Activated CD4-positive, alpha-beta memory T cell treated with anti-CD3 and anti-CD28 coated beads for 36 hours (primary cell): ENCODE measurements at regions of chr1 and their contacts with region 1.

Region 1: DNA sequence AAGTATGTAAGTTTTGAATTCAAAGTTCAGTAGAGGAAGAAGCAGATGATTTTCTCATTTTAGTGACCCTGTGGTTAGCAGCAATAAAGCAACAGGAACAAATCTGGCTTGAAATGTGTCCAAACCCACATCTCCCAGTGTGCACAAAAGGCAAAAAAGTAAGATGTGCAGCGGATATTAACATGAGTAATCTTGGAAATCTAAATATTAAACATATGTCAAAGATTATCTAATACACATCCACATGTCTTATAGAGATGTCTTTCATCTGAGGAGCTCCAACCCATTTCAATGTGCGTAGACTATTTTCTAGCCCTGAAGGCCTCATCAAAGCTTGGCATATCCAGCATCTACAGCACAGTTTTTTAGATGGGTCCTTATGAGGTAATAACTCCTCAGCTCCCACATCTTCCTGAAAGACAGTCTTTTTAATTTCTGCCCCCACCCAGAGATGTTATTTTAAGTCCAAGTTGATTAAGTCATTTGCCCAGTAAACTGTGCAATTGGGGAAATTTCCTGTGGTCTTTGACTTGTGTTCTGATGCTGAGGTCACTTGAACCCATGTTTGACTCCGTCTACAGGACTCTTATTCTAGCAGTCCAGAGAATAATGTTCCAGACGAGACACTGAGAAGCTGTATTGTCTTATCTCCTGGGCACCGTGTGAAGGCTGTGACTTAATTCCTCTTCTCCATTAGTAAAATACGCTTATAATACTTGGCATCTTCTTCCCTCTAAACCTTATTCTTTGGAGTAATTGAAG is 73.7 kb downstream of the LMO4 start:
- DNase-seq: no peak
- H3K4me3 Mint-ChIP-seq: no peak overlapping the region
- H3K27ac Mint-ChIP-seq: no peak overlapping the region
- H3K4me1 Mint-ChIP-seq: peaks cover 20% of the 10 kb centered on the region
- H3K27me3 Mint-ChIP-seq: peaks cover 4% of the 10 kb centered on the region

Region 2: DNA sequence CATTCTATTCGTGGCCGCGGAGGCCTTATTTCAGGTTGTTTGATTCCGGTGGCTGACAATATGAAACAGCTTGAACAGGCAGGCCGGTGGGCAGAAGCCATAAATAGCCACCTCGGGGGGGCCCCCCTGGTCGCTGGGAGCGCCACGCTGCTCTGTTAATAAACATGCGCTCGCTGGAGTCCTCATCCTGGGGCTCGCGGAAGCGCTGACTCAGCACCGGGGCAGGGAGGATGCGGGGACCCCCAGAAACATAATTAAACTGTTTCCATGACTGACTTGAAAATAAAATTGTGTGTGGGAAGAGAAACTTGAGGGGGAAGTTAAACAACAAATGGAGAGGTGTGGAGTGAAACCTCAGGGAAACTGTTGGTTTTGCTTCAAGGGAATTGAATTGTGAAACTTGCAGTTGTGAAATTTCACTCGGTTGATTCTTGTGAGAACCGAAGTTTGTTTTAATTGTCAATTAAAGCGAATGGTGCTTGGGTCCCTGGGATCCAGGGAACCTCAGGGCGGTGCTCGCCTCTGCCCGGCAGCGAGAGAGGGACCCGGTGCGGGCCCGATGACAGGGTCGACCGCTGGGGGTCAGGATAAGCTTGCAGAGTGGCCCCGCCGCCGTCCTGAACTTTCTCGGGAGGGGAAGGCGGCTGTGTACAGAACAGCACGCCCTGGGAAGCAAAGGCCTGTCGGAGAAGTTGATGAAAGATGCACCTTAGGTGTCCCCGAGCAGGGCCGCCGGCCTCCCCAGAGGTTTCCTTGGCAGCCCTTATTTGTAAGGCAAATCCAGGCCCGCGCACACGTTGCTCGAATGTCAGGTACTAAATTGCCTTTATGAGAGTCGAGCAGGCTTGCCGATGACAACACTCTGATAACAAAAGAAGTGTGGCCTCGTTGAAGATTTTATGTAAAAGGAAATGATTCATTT is 250.7 kb before region 1 on chr1:
- CTCF ChIA-PET with region 1: no interaction called
- POLR2A ChIA-PET with region 1: no interaction called
- intact Hi-C with region 1: loop called (anchors 5 kb)
- DNase-seq: peak; percentile 54
- H3K4me3 Mint-ChIP-seq: peak overlapping the region; percentile 54
- H3K27ac Mint-ChIP-seq: no peak overlapping the region
- H3K4me1 Mint-ChIP-seq: peaks cover 16% of the 10 kb centered on the region
- H3K27me3 Mint-ChIP-seq: peaks cover 54% of the 10 kb centered on the region

Region 3: GRCh38 chr1:87335175-87335884 is 67.1 kb before region 1 on chr1:
- CTCF ChIA-PET with region 1: no interaction called
- POLR2A ChIA-PET with region 1: interaction called, 7 read pairs
- intact Hi-C with region 1: loop called (anchors 1 kb)
- DNase-seq: peak; percentile 75
- H3K4me3 Mint-ChIP-seq: peak overlapping the region; percentile 76
- H3K27ac Mint-ChIP-seq: peak overlapping the region; percentile 91
- H3K4me1 Mint-ChIP-seq: peaks cover 60% of the 10 kb centered on the region
- H3K27me3 Mint-ChIP-seq: peaks cover 6% of the 10 kb centered on the region

Region 4: GRCh38 chr1:87435484-87435883 is 33.1 kb after region 1 on chr1:
- CTCF ChIA-PET with region 1: no interaction called
- POLR2A ChIA-PET with region 1: no interaction called
- intact Hi-C with region 1: loop called (anchors 1 kb)
- DNase-seq: peak; percentile 36
- H3K4me3 Mint-ChIP-seq: no peak overlapping the region
- H3K27ac Mint-ChIP-seq: no peak overlapping the region
- H3K4me1 Mint-ChIP-seq: peaks cover 10% of the 10 kb centered on the region
- H3K27me3 Mint-ChIP-seq: peaks cover 6% of the 10 kb centered on the region

Region 5: DNA sequence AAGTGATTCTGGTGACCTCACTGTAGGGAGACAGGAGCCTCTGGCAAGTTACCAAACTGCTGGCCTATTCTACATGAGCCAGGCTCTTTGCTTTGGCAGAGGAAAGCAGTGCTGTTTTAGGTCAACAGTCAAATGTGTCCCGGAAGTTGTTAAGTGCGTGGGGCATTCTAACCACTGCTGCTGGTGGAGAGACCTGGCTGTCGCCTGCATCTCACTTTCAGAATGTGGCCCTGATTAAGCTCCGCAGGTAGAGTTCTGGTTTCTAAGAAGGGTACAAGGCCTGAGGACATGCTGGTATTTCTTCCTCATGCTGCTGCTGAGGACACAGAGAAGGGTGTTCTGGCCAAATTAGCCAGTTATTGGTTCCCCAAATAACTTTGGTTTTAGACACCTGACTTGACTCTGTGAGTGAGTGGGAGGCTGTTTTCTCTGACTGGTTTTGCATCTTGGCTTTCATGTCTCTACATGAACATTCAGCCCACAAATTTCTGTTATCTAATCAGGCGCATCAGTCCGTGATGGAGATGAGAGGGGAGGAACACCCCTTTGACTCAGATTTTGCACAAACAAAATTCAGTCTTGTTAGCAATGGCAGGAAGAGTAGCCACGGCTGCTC is 47.0 kb after region 1 on chr1:
- CTCF ChIA-PET with region 1: no interaction called
- POLR2A ChIA-PET with region 1: interaction called, 4 read pairs
- intact Hi-C with region 1: loop called (anchors 1 kb)
- DNase-seq: peak; percentile 80
- H3K4me3 Mint-ChIP-seq: peak overlapping the region; percentile 34
- H3K27ac Mint-ChIP-seq: peak overlapping the region; percentile 78
- H3K4me1 Mint-ChIP-seq: peaks cover 33% of the 10 kb centered on the region
- H3K27me3 Mint-ChIP-seq: no peaks in the 10 kb centered on the region